Activated CD8-positive, alpha-beta T cell treated with anti-CD3 and anti-CD28 coated beads for 36 hours (primary cell): ENCODE measurements at regions of chr5 and their contacts with region 1.

Region 1: GRCh38 chr5:133930061-133930812 is 38.2 kb downstream of the C5orf15 start:
- DNase-seq: peak; percentile 90
- ATAC-seq: peak; percentile 84
- H3K4me3 Mint-ChIP-seq: peak overlapping the region; percentile 68
- H3K27ac Mint-ChIP-seq: peak overlapping the region; percentile 96
- H3K4me1 Mint-ChIP-seq: peaks cover 60% of the 10 kb centered on the region
- H3K27me3 Mint-ChIP-seq: no peaks in the 10 kb centered on the region
- CTCF ChIP-seq: no peak

Region 2: GRCh38 chr5:133754575-133755169 is 175.6 kb before region 1 on chr5:
- CTCF ChIA-PET with region 1: no interaction called
- POLR2A ChIA-PET with region 1: no interaction called
- intact Hi-C with region 1: loop called (anchors 10 kb)
- DNase-seq: peak; percentile 53
- ATAC-seq: peak; percentile 66
- H3K4me3 Mint-ChIP-seq: no peak overlapping the region
- H3K27ac Mint-ChIP-seq: no peak overlapping the region
- H3K4me1 Mint-ChIP-seq: peaks cover 4% of the 10 kb centered on the region
- H3K27me3 Mint-ChIP-seq: peaks cover 15% of the 10 kb centered on the region
- CTCF ChIP-seq: peak; percentile 61

Region 3: DNA sequence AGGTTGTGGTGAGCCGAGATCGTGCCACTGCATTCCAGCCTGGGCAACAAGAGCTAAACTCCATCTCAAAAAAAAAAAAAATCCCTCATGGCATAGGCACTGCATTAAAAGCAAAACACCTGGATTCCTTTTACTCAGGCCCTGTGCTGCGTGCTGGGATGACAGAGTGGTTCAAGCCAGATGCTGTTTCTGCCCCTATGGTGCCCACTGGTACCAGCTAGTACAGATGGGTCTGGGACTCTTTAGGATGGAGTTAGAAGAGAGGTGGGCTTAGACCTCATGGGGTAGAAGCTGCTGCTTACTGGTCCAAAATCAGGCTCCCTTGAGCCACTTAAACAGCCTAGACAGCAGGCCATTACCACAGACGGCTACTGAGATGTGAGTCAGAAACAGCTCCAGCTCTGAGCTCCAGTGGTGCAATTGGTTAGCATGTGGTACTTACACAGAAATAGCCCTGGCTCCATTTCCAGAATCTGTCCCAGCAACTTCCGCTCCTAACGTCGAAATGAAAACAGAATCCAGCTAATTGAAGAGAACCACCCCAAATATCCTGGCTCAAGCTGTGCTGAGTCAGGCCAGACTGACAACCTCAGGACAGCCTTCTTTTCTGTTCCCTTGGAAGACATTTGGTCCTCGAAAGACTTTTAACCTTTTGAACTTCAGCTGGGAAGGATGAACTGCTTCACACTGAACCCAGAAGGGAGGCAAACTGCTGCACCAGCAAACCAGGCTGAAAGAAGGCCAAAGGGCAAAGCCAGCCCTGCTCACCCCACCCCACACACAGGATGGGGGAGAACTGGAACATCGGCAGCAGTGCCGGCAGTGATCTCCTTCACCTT is 22.7 kb after region 1 on chr5:
- CTCF ChIA-PET with region 1: interaction called, 11 read pairs
- POLR2A ChIA-PET with region 1: interaction called, 5 read pairs
- intact Hi-C with region 1: no loop called
- DNase-seq: no peak
- ATAC-seq: no peak
- H3K4me3 Mint-ChIP-seq: no peak overlapping the region
- H3K27ac Mint-ChIP-seq: peak overlapping the region; percentile 16
- H3K4me1 Mint-ChIP-seq: peaks cover 10% of the 10 kb centered on the region
- H3K27me3 Mint-ChIP-seq: no peaks in the 10 kb centered on the region
- CTCF ChIP-seq: no peak

Region 4: DNA sequence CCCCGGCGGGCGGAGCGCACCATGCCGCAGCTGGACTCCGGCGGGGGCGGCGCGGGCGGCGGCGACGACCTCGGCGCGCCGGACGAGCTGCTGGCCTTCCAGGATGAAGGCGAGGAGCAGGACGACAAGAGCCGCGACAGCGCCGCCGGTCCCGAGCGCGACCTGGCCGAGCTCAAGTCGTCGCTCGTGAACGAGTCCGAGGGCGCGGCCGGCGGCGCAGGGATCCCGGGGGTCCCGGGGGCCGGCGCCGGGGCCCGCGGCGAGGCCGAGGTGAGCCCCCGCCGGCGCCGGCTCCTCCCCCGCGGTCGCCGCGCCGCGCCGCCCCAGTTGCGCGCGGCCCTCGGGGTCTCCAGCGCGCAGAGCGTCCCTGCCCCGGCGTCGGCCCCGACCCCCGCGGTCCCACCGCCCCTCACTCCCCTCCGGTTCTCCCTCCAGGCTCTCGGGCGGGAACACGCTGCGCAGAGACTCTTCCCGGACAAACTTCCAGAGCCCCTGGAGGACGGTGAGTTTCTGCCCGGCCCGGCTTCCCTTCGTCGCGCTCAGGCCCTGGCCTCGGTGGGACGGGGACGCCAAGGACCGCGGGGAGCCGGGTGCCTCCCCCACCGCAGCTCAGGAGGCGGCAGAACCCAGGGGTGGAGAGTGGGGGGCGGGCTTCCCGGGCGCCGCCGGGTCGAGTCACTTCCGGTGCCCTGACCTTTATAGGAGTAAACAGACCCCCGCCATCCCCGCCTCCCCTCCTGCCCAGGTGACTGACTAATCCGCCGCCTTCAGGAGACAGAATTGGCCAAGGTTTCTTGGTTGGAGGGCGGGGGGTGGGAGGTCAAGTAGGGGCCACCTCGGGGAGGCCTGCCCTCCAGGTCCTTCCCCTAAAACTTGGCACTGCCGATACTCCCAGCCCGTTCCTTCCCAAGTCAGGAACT is 184.9 kb after region 1 on chr5:
- CTCF ChIA-PET with region 1: no interaction called
- POLR2A ChIA-PET with region 1: no interaction called
- intact Hi-C with region 1: no loop called
- DNase-seq: peak; percentile 95
- ATAC-seq: peak; percentile 44
- H3K4me3 Mint-ChIP-seq: peak overlapping the region; percentile 66
- H3K27ac Mint-ChIP-seq: peak overlapping the region; percentile 72
- H3K4me1 Mint-ChIP-seq: peaks cover 75% of the 10 kb centered on the region
- H3K27me3 Mint-ChIP-seq: no peaks in the 10 kb centered on the region
- CTCF ChIP-seq: no peak